ENCODE measurements at regions of chr3 and their contacts with region 1.

Region 1: DNA sequence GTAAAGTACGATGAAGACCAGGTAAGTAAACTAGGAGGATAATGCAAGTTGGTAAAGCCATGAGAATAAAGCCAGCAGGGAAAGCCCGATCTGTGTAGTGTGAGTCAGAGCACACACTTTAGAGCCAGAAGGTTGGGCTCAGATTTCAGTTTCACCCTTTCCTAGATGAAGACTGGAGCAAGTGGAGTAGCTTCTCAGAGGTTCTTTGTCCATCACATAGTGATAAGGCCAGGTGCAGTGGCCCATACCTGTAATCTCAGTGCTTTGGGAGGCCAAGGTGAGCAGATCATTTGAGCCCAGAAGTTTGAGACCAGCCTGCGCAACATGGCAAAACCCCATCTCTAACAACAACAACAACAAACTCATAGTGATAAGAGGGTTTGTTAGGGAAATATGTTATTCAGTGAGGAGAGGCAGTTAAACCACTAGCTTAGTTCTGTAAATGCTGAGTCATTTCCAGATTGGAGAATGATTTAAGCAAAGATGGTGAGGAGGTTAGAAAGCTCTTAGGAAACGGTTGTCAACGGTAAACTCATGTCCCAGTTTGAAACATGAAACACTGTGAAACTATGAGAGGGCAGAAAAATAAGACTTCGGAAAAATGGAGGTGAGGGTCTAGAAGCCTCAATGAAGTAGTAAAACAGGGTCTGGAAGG is 39.0 kb downstream of the IL12A start:
- DNase-seq: peak; percentile 33 to 56
- H3K4me3 ChIP-seq: no peak overlapping the region
- H3K27ac ChIP-seq: peak overlapping the region; percentile 63
- H3K4me1 ChIP-seq: peaks cover 12% of the 10 kb centered on the region
- H3K27me3 ChIP-seq: no peaks in the 10 kb centered on the region
- CTCF ChIP-seq: no peak

Region 2: DNA sequence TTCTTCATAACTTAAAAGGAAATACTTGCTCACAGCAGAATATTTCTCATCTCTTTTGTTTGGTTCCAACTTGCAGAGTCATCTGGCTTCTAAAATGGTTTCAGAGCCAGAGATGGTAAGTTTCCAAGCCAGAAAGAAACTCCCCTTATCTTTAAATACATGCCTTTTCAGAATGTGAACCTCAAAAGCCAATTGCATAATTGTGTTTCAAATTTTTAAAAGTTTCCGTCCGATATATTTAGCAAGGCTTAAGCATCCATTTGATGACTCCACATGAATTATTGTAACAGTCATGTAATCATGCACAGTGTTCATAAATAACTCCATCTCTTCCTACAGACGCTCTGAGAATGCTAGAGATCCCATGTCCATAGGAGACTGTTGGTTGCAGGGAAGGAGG is 157.0 kb after region 1 on chr3:
- CTCF ChIA-PET with region 1: no interaction called
- POLR2A ChIA-PET with region 1: no interaction called
- intact Hi-C with region 1: no loop called
- DNase-seq: no peak
- H3K4me3 ChIP-seq: no peak overlapping the region
- H3K27ac ChIP-seq: no peak overlapping the region
- H3K4me1 ChIP-seq: no peaks in the 10 kb centered on the region
- H3K27me3 ChIP-seq: no peaks in the 10 kb centered on the region
- CTCF ChIP-seq: no peak

Region 3: GRCh38 chr3:160343132-160343531 is 315.5 kb after region 1 on chr3:
- CTCF ChIA-PET with region 1: interaction called, 3 read pairs
- POLR2A ChIA-PET with region 1: no interaction called
- intact Hi-C with region 1: loop called (anchors 1 kb)
- DNase-seq: no peak
- H3K4me3 ChIP-seq: no peak overlapping the region
- H3K27ac ChIP-seq: no peak overlapping the region
- H3K4me1 ChIP-seq: no peaks in the 10 kb centered on the region
- H3K27me3 ChIP-seq: no peaks in the 10 kb centered on the region
- CTCF ChIP-seq: peak; percentile 77

Region 4: GRCh38 chr3:160486459-160486869 is 458.8 kb after region 1 on chr3:
- CTCF ChIA-PET with region 1: no interaction called
- POLR2A ChIA-PET with region 1: no interaction called
- intact Hi-C with region 1: loop called (anchors 5 kb)
- DNase-seq: no peak
- H3K4me3 ChIP-seq: no peak overlapping the region
- H3K27ac ChIP-seq: no peak overlapping the region
- H3K4me1 ChIP-seq: no peaks in the 10 kb centered on the region
- H3K27me3 ChIP-seq: no peaks in the 10 kb centered on the region
- CTCF ChIP-seq: peak; percentile 85